ENCODE measurements at regions of chr5 and their contacts with region 1.

Region 1: DNA sequence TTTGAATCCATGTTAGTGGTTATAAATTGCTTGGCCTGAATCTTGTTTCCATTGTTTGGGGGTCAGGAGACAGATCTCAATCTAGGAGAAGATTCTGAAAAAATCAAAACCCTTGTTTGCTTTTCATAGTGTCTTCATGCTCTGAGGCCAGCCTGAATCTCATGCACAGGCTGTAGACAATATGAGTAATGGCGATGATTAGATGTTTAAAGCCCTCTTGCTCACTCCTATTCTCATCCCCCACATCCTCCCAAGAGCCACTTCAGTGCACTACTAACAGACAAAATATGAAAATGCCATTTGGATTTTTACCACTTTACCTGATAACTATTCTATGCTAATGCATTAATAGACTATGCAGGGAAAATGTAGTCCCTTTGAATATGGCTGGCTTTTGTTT is 129.4 kb downstream of the NUDT12 start:
- DNase-seq: no peak
- H3K4me3 ChIP-seq: no peak overlapping the region
- H3K27ac ChIP-seq: no peak overlapping the region
- H3K4me1 ChIP-seq: no peaks in the 10 kb centered on the region
- H3K27me3 ChIP-seq: no peaks in the 10 kb centered on the region
- CTCF ChIP-seq: no peak

Region 2: DNA sequence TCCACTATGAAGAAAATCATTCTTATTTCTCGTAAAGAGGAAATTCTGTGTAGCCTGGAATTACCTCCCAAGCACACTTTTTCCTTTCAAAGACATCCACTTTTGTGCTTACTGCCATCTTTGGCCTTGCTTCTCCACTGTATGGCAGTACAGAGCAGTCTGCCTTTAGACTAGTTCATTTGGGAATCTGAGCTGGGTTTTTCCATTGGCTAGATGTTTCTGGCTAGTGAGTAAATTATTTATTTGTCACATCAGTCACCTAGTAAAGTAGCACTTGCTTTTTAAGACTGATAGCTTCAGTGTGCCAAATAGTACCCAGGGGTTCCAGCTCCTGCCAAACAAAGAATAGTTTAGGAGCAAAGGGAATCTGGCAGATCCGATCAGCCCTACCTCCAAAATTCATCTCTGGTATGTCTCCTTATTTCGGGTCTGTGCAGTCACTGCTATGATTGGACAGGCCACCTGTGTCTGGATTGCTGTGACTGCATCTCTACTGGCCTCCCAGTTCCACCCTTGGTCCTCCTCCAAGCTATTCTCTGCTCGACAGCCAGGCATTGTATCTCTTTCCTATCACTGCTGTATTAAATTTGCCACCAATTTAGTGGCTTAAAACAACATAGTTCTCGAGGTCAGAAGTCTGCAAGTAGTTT is 31.7 kb after region 1 on chr5:
- dilution Hi-C with region 1: loop called (anchors 5 kb)
- DNase-seq: no peak
- H3K4me3 ChIP-seq: no peak overlapping the region
- H3K27ac ChIP-seq: no peak overlapping the region
- H3K4me1 ChIP-seq: no peaks in the 10 kb centered on the region
- H3K27me3 ChIP-seq: no peaks in the 10 kb centered on the region
- CTCF ChIP-seq: no peak

Region 3: DNA sequence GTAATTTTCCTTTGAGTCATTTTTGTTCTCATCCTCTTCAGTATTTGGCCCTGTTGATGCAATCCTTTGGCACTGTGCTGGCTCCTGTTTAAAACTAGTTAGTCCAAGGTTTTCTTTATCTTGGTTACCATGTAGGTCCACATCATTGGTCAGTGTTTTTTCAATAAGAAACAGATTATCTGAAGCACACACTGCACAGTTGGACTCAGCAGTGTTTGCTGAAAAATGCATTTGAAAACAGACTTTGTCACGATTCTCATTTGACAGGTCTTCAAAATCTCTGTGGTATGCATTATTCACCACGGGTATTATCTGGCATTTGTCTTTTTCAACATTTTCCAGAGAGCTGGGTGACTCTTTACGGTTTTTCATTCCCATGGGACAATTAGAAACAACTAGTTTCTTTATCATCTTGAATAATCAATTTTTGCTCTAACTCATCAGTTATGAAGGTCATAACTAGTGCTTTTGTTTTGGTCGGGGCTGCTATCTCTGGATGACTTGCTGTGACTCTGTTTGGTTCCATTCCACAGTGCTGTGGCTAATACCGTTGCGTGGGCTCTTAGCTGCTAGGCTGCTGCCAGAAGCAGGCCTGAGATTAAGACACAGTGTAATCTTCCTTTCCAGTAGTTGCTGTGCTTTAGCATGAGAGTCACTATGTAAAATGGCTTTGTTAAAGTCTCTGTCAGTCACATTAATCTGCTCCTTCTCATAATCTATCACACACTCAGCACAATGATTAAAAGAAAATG is 93.1 kb after region 1 on chr5:
- dilution Hi-C with region 1: no loop called
- DNase-seq: no peak
- H3K4me3 ChIP-seq: no peak overlapping the region
- H3K27ac ChIP-seq: no peak overlapping the region
- H3K4me1 ChIP-seq: peaks cover 15% of the 10 kb centered on the region
- H3K27me3 ChIP-seq: no peaks in the 10 kb centered on the region
- CTCF ChIP-seq: no peak

Measured in keratinocyte (primary cell).